ENCODE measurements at regions of chr6 and their contacts with region 1.

Region 1: GRCh38 chr6:2749969-2750600 is 637 bp downstream of the MYLK4 start:
- DNase-seq: peak; percentile 64

Region 2: GRCh38 chr6:2760882-2761842 is 11.1 kb after region 1 on chr6:
- CTCF ChIA-PET with region 1: interaction called, 16 read pairs
- POLR2A ChIA-PET with region 1: interaction called, 4 read pairs
- DNase-seq: no peak

Region 3: GRCh38 chr6:2766746-2767656 is 16.9 kb after region 1 on chr6:
- CTCF ChIA-PET with region 1: interaction called, 10 read pairs
- POLR2A ChIA-PET with region 1: interaction called, 4 read pairs
- DNase-seq: no peak

Region 4: GRCh38 chr6:2853761-2854395 is 103.8 kb after region 1 on chr6:
- CTCF ChIA-PET with region 1: no interaction called
- POLR2A ChIA-PET with region 1: no interaction called
- DNase-seq: peak; percentile 56

Measured in HEK293T (cell line).